ENCODE measurements at regions of chr3 and their contacts with region 1.

Region 1: DNA sequence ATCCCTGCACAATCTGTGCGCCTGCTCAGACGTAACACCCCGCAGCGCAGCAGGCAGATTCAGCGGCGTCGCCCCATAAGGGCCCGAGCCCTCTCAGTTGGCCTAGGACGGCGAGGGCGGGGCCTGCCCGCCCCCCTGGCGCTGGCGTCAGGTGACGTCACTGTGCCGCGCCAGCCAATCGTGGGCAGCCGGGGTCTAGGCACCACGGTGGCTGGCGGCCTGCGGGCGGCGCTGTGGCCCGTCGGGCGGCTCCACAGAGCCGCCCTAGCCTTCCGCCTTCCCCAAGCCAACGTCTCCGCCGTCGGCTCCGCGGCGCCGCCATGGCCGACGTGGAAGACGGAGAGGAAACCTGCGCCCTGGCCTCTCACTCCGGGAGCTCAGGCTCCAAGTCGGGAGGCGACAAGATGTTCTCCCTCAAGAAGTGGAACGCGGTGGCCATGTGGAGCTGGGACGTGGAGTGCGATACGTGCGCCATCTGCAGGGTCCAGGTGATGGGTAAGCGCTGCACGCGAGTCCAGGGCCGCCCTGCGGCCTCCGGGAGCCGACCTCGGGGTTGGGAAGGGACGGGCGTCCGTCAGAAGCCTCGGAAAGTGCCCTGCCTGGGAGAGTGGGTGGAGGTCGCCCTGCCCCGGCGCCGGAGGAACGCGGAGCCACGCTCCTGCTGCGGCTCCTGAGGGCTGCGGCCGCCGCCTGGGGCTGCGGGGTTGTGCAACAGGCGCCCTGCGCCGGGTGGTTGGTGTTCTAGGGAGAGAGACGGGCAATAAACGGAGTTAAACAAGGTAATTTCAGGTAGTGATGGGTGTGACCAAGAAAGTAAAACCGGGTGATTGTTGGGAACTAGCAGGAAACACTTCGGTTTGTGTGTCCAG is at the start of gene RNF7:
- DNase-seq: peak; percentile 97 to 99 (median 97)
- ATAC-seq: peak; percentile 91
- H3K4me3 ChIP-seq: peak within 1 kb of the TSS; percentile 79
- H3K4me1 ChIP-seq: peaks cover 28% of the 10 kb centered on the region
- CTCF ChIP-seq: peak; percentile 88
- total RNA-seq, gene RNF7: 107 to 144 (median 112) TPM

Region 2: DNA sequence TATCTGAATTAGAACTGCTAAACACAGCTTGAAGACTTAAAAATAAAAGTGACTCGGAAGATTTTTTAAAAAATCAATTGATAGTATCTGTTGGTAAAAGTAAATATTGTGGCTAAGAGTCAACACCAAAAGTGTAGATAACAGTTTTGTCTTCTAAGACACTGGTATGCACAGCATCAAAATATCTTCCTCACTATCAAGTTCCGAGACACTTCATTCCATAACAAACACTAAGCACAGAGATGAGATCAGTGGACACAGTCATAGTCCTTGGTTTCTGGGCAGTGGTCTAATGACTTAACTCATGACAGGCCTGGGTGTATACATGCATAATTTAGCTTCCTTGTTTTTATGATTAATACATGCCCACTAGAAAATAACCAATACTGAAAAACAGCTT is 443.4 kb before region 1 on chr3:
- intact Hi-C with region 1: no loop called
- DNase-seq: no peak
- ATAC-seq: peak; percentile 31
- H3K4me3 ChIP-seq: no peak overlapping the region
- H3K4me1 ChIP-seq: no peaks in the 10 kb centered on the region
- CTCF ChIP-seq: no peak

Region 3: GRCh38 chr3:141680620-141681389 is 57.5 kb before region 1 on chr3:
- intact Hi-C with region 1: no loop called
- DNase-seq: peak in 1 of 3 donors; percentile 12
- ATAC-seq: no peak
- H3K4me3 ChIP-seq: no peak overlapping the region
- H3K4me1 ChIP-seq: no peaks in the 10 kb centered on the region
- CTCF ChIP-seq: no peak

Region 4: GRCh38 chr3:141875374-141875892 is 137.2 kb after region 1 on chr3:
- intact Hi-C with region 1: loop called in 1 of 2 experiments (anchors 5 kb)
- DNase-seq: peak; percentile 91 to 93 (median 91)
- ATAC-seq: peak; percentile 82
- H3K4me3 ChIP-seq: peak overlapping the region; percentile 35
- H3K4me1 ChIP-seq: peaks cover 21% of the 10 kb centered on the region
- CTCF ChIP-seq: peak; percentile 82

Region 5: DNA sequence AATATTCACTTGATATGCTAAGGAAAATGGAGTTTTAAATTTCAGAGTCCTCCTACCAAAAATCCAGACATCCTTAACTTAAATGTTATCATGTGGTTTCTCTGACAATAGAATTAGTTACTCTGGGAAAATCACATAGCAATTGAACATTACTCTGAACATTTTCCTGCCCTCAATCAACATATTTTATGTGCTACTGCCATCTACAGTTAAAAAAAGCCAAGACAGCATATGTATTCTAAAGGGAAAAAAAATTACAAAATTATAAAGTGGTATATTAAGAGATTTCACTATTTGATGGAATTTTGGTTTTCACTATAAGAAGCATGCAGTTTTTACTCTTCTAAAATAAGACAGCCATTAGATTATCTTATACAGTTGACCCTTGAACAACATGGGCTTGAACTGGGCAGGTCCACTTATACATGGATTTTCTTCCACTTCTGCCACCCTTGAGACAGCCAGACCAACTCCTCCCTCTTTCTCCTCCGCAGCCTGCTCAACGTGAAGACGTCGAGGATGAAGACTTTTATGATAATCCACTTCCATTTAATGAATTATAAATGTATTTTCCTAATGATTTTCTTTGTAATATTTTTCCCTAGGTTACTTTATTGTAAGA is 260.5 kb after region 1 on chr3:
- intact Hi-C with region 1: no loop called
- DNase-seq: no peak
- ATAC-seq: no peak
- H3K4me3 ChIP-seq: no peak overlapping the region
- H3K4me1 ChIP-seq: peaks cover 3% of the 10 kb centered on the region
- CTCF ChIP-seq: no peak